ENCODE measurements at regions of chr1 and their contacts with region 1.

Region 1: DNA sequence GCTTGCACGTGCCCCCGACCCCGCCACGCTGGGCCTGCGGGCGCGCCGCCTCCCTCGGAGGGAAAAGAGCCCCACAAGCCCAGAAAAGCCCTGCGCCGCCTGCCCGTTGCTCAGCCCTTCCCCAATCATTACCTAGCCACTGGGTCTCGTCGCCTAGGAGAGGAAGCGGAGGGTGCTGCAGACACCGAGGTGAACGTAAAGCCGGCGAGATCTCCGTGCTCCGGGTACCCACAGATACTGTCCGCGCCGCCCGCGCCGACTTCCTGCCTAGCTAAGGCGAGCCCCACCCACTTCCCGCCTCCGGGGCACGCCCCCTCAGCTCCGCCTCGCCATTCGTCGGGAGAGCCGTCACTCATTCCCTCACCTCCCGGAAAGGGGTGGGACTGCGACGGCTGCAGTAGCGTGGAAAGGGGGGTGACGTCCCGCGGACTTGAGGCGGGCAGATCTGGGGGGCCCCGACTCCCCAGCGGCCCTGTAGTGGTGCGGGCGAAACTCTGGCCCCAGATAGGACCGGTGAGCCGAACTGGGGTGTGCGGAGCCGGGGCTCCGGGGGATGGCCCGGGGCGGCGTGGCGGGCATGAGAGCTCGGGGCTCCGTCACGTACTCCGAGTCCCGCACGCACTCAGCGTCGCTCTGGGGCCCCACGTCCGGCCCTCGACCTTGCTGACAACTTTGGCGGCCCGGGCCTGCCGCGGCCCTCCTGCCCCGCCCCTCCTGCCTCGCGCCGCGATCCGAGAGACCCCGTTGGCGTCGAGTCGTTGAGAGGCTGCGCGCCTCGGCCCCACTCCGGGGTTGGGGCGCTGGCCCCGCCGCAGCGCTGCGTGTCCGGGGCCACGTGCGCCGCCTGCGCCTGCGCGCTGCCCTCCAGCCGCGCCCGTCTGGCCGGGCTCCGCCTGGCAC is at the start of gene ENO1:
- DNase-seq: peak; percentile 96 to 100 (median 99)
- ATAC-seq: peak; percentile 92
- H3K4me3 ChIP-seq: peak within 1 kb of the TSS; percentile 94
- H3K4me3 Mint-ChIP-seq: peak within 1 kb of the TSS; percentile 85 to 99 (median 94)
- H3K27ac ChIP-seq: peak within 1 kb of the TSS; percentile 90
- H3K27ac Mint-ChIP-seq: peak within 1 kb of the TSS; percentile 94 to 100 (median 97)
- H3K4me1 ChIP-seq: peaks cover 36 to 38% of the 10 kb centered on the region in 2 donors
- H3K4me1 Mint-ChIP-seq: peaks cover 21 to 48% (median 43%) of the 10 kb centered on the region in 7 donors
- H3K27me3 ChIP-seq: no peaks in the 10 kb centered on the region
- H3K27me3 Mint-ChIP-seq: peaks cover 0 to 3% (median 0%) of the 10 kb centered on the region in 5 donors
- total RNA-seq, gene ENO1: 198 to 3,569 (median 264) TPM

Region 2: DNA sequence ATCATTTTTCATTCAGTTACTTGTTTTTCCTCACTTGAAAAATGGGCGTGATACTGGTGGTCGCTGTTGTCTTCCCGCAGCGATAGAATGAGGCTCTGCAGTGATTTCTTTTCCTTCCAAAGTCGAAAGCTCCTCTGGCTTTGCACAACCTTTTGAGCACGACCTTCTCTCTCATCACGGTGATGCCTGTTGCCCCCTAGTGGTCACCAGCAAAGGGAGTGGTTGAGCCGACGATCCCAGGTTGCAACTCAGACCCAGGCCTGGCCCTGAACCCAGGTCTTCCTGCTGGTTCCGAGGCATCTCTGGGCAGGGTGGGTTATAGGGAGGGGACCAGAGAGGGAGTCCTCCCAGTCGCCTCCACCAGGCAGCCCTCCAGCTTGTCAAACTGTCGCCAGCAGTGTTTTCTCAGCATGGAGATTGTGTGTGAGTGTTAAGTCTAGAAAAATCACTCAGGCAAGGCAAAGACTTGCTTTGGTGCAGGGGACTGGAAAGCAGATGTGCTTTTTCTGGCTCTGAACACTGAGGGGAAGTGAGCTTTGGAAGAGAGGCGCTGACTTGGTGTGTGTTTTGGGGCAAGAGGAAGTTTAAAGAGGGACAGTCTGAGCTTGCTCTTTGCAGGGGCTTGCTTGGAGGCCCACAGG is 1808.2 kb before region 1 on chr1:
- CTCF ChIA-PET with region 1: no interaction called
- POLR2A ChIA-PET with region 1: no interaction called
- intact Hi-C with region 1: no loop called
- DNase-seq: peak in 7 of 9 donors; percentile 26 to 53 (median 45)
- ATAC-seq: peak; percentile 65
- H3K4me3 ChIP-seq: no peak overlapping the region
- H3K4me3 Mint-ChIP-seq: peak overlapping the region in 7 of 10 donors; percentile 30 to 60 (median 41)
- H3K27ac ChIP-seq: no peak overlapping the region
- H3K27ac Mint-ChIP-seq: no peak overlapping the region
- H3K4me1 ChIP-seq: no peaks in the 10 kb centered on the region
- H3K4me1 Mint-ChIP-seq: peaks cover 0 to 4% (median 0%) of the 10 kb centered on the region in 7 donors
- H3K27me3 ChIP-seq: no peaks in the 10 kb centered on the region
- H3K27me3 Mint-ChIP-seq: peaks cover 9 to 32% (median 25%) of the 10 kb centered on the region in 5 donors

Region 3: GRCh38 chr1:8817406-8818324 is 61.0 kb before region 1 on chr1 and contains the start of gene RERE:
- CTCF ChIA-PET with region 1: no interaction called
- POLR2A ChIA-PET with region 1: interaction called, 13 read pairs
- intact Hi-C with region 1: loop called (anchors 1 to 2 kb)
- DNase-seq: peak; percentile 92 to 100 (median 99)
- ATAC-seq: peak; percentile 99
- H3K4me3 ChIP-seq: peak within 1 kb of the TSS; percentile 96
- H3K4me3 Mint-ChIP-seq: peak within 1 kb of the TSS; percentile 84 to 99 (median 92)
- H3K27ac ChIP-seq: peak within 1 kb of the TSS; percentile 96
- H3K27ac Mint-ChIP-seq: peak within 1 kb of the TSS; percentile 83 to 99 (median 95)
- H3K4me1 ChIP-seq: peaks cover 10 to 15% of the 10 kb centered on the region in 2 donors
- H3K4me1 Mint-ChIP-seq: peaks cover 26 to 46% (median 41%) of the 10 kb centered on the region in 7 donors
- H3K27me3 ChIP-seq: no peaks in the 10 kb centered on the region
- H3K27me3 Mint-ChIP-seq: peaks cover 0 to 23% (median 0%) of the 10 kb centered on the region in 5 donors
- total RNA-seq, gene RERE: 75.6 to 114 (median 107) TPM

Region 4: GRCh38 chr1:8903908-8904650 is 25.4 kb after region 1 on chr1:
- CTCF ChIA-PET with region 1: no interaction called
- POLR2A ChIA-PET with region 1: interaction called, 9 read pairs
- intact Hi-C with region 1: loop called in 1 of 2 experiments (anchors 1 kb)
- DNase-seq: no peak
- ATAC-seq: no peak
- H3K4me3 ChIP-seq: no peak overlapping the region
- H3K4me3 Mint-ChIP-seq: no peak overlapping the region
- H3K27ac ChIP-seq: no peak overlapping the region
- H3K27ac Mint-ChIP-seq: peak overlapping the region in 4 of 9 donors; percentile 28 to 46 (median 36)
- H3K4me1 ChIP-seq: peaks cover 5 to 17% of the 10 kb centered on the region in 2 donors
- H3K4me1 Mint-ChIP-seq: peaks cover 13 to 55% (median 23%) of the 10 kb centered on the region in 7 donors
- H3K27me3 ChIP-seq: no peaks in the 10 kb centered on the region
- H3K27me3 Mint-ChIP-seq: no peaks in the 10 kb centered on the region

Region 5: DNA sequence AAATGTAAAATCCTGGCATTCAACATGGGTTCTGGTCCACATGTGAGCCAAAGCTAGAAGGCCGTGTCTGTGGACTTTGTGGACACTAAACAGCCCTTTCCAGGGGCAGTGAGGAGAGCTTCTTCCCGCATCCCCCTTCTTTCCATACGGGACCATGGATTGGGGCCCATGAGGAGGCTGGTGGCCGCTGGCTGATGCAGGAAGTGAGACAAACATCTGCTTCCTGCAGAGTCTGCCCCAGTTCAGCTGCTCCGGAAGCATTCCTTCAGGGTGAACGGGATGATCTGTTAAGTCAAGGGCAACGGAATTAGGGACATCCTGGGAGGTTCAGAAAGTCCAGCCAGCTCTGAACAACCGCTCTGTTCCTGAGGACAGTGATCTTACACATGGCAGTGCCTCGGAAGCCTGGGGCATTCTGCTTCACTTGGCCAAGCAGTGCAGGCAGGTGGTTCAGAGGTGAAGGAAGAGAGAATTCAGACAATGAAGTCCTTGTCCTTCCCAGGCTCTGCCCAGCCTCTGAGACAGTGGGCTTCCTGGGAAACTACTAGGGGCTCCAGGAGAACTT is 68.5 kb after region 1 on chr1:
- CTCF ChIA-PET with region 1: no interaction called
- POLR2A ChIA-PET with region 1: interaction called, 4 read pairs
- intact Hi-C with region 1: loop called in 1 of 2 experiments (anchors 2 kb)
- DNase-seq: peak in 2 of 9 donors; percentile 19 to 36
- ATAC-seq: no peak
- H3K4me3 ChIP-seq: no peak overlapping the region
- H3K4me3 Mint-ChIP-seq: peak overlapping the region; percentile 21 to 80 (median 61)
- H3K27ac ChIP-seq: peak overlapping the region; percentile 57
- H3K27ac Mint-ChIP-seq: peak overlapping the region; percentile 68 to 98 (median 90)
- H3K4me1 ChIP-seq: peaks cover 16 to 68% of the 10 kb centered on the region in 2 donors
- H3K4me1 Mint-ChIP-seq: peaks cover 42 to 82% (median 61%) of the 10 kb centered on the region in 7 donors
- H3K27me3 ChIP-seq: no peaks in the 10 kb centered on the region
- H3K27me3 Mint-ChIP-seq: no peaks in the 10 kb centered on the region

Region 6: DNA sequence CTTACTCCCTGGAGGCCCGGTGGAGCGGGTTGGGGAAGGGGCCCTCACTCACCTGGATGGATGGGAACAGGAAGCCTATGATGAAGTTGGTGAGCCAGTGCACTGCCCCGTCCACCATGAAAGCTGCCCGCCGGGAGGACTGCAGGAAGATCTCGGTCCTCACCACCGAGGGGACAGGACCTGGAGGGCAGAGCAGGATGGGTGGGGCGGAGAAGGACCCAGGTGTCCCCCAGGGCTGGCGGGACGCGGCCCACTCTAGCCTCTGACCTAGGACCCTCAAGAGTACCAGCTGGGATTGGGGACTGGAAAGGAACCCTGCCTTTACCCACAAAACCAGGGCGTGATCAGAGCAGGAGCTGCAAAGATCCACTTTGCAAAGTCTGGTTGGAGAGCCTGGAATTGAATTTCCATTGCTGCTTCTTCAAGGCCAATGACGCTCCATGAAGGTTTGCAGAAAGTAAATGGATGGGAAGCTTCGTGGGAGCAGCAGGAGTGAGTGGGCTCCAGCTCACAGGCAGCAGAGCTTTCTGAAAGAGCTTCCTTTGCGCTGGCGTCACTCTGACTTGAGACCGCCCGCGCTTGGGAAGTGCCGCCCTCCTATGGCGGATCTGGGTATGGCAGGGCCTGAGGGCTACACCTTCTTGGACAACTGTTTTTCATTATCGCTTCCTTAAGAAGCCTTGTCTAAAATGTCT is 126.1 kb after region 1 on chr1:
- CTCF ChIA-PET with region 1: interaction called, 6 read pairs
- POLR2A ChIA-PET with region 1: interaction called, 4 read pairs
- intact Hi-C with region 1: loop called (anchors 1 kb)
- DNase-seq: peak; percentile 63 to 89 (median 75)
- ATAC-seq: peak; percentile 96
- H3K4me3 ChIP-seq: no peak overlapping the region
- H3K4me3 Mint-ChIP-seq: peak overlapping the region in 8 of 10 donors; percentile 12 to 68 (median 49)
- H3K27ac ChIP-seq: peak overlapping the region; percentile 18
- H3K27ac Mint-ChIP-seq: peak overlapping the region in 4 of 9 donors; percentile 6 to 79 (median 32)
- H3K4me1 ChIP-seq: peaks cover 3 to 8% of the 10 kb centered on the region in 2 donors
- H3K4me1 Mint-ChIP-seq: peaks cover 0 to 12% (median 6%) of the 10 kb centered on the region in 7 donors
- H3K27me3 ChIP-seq: no peaks in the 10 kb centered on the region
- H3K27me3 Mint-ChIP-seq: no peaks in the 10 kb centered on the region

Region 7: DNA sequence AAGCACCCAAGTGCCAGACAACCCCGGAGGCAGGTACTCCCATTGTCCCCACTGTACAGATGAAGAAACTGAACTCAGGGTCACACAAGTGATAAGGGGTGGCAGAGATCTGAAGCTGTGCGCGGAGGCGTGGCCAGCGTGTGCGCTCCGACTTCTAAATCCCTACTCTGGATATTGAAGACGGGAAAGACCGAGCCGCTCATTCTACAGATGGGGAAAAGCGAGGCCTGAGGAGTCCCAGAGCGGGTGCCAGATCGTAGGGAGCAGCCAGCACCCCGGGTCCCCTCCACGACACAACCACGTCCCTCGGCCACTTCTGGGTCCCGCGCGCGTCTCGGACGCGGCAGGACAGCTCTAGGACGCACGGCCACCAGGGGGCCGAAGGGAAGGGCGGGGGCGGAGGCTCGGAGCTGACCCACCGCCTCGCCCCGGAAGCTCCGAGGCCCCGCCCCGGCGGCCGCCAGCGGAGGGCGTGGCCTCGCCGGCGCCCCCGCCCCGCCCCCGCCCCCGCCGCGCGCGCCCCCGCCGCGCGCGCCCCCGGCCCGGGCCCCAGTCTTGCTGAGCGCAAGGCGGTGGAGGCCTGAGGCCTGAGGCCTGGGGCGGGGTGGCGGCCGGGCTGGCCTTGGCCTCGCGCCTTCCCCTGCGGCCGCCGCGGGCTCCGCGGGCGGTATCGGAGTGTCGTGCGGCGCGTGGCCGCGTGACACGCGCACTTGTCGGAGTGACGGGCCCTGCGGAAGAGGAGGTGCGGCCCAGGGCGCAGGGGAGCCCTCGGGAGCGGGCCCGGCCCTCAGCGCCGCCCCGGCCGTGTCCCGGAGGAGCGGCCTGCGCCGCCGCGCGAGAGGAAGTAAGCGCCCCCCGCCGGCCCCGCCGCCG is 355.8 kb after region 1 on chr1 and contains the start of gene H6PD:
- CTCF ChIA-PET with region 1: no interaction called
- POLR2A ChIA-PET with region 1: no interaction called
- intact Hi-C with region 1: loop called in 1 of 2 experiments (anchors 5 kb)
- DNase-seq: peak; percentile 60 to 88 (median 74)
- ATAC-seq: peak; percentile 88
- H3K4me3 ChIP-seq: peak within 1 kb of the TSS; percentile 74
- H3K4me3 Mint-ChIP-seq: peak within 1 kb of the TSS; percentile 83 to 97 (median 96)
- H3K27ac ChIP-seq: peak within 1 kb of the TSS; percentile 86
- H3K27ac Mint-ChIP-seq: peak within 1 kb of the TSS; percentile 91 to 99 (median 98)
- H3K4me1 ChIP-seq: peaks cover 14 to 23% of the 10 kb centered on the region in 2 donors
- H3K4me1 Mint-ChIP-seq: peaks cover 19 to 44% (median 36%) of the 10 kb centered on the region in 7 donors
- H3K27me3 ChIP-seq: no peaks in the 10 kb centered on the region
- H3K27me3 Mint-ChIP-seq: no peaks in the 10 kb centered on the region
- total RNA-seq, gene H6PD: 18.6 to 27.6 (median 19.8) TPM

Region 8: DNA sequence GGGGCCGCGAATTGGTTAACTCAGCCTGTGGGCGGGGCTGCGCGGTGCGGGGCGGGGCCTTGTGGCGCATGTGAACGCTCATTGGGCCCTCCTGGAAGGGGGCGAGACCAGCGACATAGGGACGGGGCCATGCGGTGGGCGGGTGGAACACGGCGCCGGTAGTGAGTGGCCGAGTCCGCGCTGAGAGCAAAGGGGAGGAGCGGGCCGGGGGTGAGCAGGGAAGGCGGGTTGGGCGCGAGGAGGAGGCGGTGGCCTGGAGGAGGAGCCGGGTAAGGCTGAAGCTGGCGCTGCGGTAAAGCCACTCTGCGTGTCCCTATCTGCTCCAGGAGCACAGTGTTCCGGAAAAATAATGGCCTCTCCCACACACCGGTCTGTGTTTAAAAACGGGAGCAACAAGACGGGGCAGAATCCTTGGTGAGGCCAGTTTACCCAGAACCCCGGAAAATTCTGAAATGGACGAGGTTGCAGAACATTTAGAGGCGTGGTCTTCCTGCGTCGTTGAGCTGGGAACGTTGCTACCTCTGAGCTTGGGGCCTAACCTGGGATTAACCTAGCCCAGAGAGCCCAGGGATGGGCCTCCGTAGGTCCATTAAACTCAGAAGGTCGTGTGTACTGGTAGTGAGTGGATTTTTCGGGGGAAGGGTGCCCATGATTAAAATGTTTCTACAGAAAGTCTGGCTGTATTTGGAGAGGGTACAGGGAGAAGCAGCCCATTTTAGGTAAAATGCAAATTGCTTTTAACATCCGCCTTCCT is 1031.9 kb after region 1 on chr1:
- CTCF ChIA-PET with region 1: no interaction called
- POLR2A ChIA-PET with region 1: no interaction called
- intact Hi-C with region 1: loop called in 1 of 2 experiments (anchors 2 kb)
- DNase-seq: peak; percentile 99 to 100 (median 100)
- ATAC-seq: peak; percentile 95
- H3K4me3 ChIP-seq: peak overlapping the region; percentile 89
- H3K4me3 Mint-ChIP-seq: peak overlapping the region; percentile 88 to 98 (median 96)
- H3K27ac ChIP-seq: peak overlapping the region; percentile 75
- H3K27ac Mint-ChIP-seq: peak overlapping the region; percentile 84 to 98 (median 97)
- H3K4me1 ChIP-seq: peaks cover 13 to 15% of the 10 kb centered on the region in 2 donors
- H3K4me1 Mint-ChIP-seq: peaks cover 25 to 43% (median 31%) of the 10 kb centered on the region in 7 donors
- H3K27me3 ChIP-seq: no peaks in the 10 kb centered on the region
- H3K27me3 Mint-ChIP-seq: peaks cover 0 to 10% (median 0%) of the 10 kb centered on the region in 5 donors